ENCODE measurements at regions of chr7 and their contacts with region 1.

Region 1: GRCh38 chr7:49852619-49853462 is 79.4 kb downstream of the VWC2 start:
- DNase-seq: peak; percentile 35
- H3K4me3 ChIP-seq: no peak overlapping the region
- H3K27ac ChIP-seq: no peak overlapping the region
- H3K4me1 ChIP-seq: no peaks in the 10 kb centered on the region
- H3K27me3 ChIP-seq: no peaks in the 10 kb centered on the region
- CTCF ChIP-seq: peak; percentile 55

Region 2: DNA sequence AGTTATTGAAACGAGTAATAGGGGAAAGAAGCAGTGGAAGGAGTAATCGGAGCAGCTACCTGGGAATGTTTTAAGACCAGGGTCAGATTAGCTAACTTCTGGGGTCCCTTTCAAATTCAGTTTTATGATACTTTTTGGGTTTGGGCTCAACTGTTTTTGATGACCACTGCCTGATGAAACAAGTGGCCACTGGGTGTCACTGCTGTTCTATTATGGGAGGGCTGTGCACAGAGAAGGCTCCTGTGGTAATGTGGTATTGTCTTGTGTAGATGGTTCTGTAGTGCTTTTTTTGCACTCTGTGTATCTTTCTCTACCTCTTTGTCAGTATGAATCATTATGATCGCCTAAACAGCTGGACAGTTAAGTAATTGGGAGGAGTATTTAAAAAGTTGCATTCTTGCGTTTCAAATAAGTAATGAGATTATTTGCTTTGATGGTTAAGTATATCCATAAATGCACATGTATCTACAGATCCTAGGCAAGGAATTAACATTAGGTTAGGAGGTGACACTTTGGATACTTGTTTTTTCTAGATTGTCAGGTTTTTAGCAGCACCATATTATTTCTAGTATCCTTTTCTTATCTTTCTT is 1553.2 kb before region 1 on chr7:
- intact Hi-C with region 1: loop called (anchors 5 kb)
- DNase-seq: peak; percentile 41
- H3K4me3 ChIP-seq: no peak overlapping the region
- H3K27ac ChIP-seq: no peak overlapping the region
- H3K4me1 ChIP-seq: no peaks in the 10 kb centered on the region
- H3K27me3 ChIP-seq: no peaks in the 10 kb centered on the region
- CTCF ChIP-seq: peak; percentile 51

Region 3: GRCh38 chr7:49001610-49002033 is 851.2 kb before region 1 on chr7:
- intact Hi-C with region 1: loop called (anchors 5 kb)
- DNase-seq: peak; percentile 37
- H3K4me3 ChIP-seq: no peak overlapping the region
- H3K27ac ChIP-seq: no peak overlapping the region
- H3K4me1 ChIP-seq: no peaks in the 10 kb centered on the region
- H3K27me3 ChIP-seq: no peaks in the 10 kb centered on the region
- CTCF ChIP-seq: peak; percentile 45

Region 4: GRCh38 chr7:49631071-49631815 is 221.6 kb before region 1 on chr7:
- intact Hi-C with region 1: no loop called
- DNase-seq: no peak
- H3K4me3 ChIP-seq: no peak overlapping the region
- H3K27ac ChIP-seq: no peak overlapping the region
- H3K4me1 ChIP-seq: no peaks in the 10 kb centered on the region
- H3K27me3 ChIP-seq: no peaks in the 10 kb centered on the region
- CTCF ChIP-seq: no peak